Natural killer cell (primary cell): ENCODE measurements at regions of chrX and their contacts with region 1.

Region 1: DNA sequence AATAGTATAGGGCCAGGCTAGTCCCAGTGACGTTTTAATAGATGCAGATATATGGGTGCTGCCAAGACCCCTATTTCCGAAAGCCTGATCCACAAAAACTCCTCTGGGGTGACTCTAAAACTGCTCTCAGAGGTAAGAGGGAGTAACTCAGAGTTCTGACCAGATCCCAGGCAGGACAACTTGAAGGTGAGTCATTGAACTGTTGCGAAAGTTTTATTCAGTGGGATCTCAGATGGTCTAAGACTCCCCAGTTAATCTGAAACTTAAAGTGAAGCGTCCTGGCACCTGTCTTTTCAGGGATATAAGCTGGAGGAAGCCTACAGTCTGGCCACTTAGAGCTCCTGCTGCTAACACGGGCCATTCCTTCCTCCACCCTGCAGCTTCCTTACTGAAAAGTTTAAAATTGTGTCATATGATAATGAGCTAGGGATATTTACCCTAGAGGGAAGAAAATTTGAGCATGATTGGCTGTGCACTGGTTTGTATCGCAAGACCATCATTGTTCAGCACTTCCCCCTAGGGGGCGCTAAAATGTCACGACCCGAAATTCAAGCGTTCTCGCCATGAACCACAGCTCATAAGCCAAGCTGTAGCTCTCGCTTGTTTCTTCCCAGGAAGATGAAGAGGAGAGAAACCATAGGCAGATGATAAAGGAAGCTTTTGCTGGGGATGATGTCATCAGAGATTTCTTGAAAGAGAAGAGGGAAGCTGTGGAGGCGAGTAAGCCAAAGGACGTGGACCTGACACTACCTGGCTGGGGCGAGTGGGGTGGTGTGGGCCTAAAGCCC is 19.5 kb downstream of the UTP14A start:
- DNase-seq: peak; percentile 47 to 85
- ATAC-seq: peak; percentile 71 to 80 (median 77)
- H3K4me3 ChIP-seq: no peak overlapping the region
- H3K4me3 Mint-ChIP-seq: no peak overlapping the region
- H3K27ac ChIP-seq: no peak overlapping the region
- H3K27ac Mint-ChIP-seq: no peak overlapping the region
- H3K4me1 ChIP-seq: no peaks in the 10 kb centered on the region
- H3K4me1 Mint-ChIP-seq: peaks cover 0 to 5% of the 10 kb centered on the region in 2 donors
- H3K27me3 ChIP-seq: no peaks in the 10 kb centered on the region
- H3K27me3 Mint-ChIP-seq: no peaks in the 10 kb centered on the region
- CTCF ChIP-seq: peak; percentile 64

Region 2: DNA sequence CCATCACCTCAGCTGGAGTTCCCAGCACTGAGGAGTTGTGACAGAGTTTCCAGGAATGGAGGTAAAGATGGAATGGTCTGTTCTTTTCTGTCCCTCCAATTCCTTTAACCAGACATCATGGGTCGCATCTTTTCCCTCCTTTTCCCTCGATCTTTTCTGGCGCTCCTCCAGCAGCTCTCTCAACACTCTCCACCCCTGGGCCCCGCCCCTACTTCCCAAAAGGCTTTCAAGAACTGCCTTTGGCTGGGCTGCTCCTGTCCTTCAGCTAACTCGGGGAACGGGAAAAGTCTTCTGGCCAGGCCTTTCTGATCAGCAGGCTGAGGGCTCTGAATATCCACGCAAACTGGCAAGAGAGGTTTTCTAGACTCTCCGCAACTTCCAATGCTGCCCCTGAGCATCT is 14.5 kb after region 1 on chrX:
- intact Hi-C with region 1: no loop called
- DNase-seq: no peak
- ATAC-seq: no peak
- H3K4me3 ChIP-seq: no peak overlapping the region
- H3K4me3 Mint-ChIP-seq: no peak overlapping the region
- H3K27ac ChIP-seq: no peak overlapping the region
- H3K27ac Mint-ChIP-seq: no peak overlapping the region
- H3K4me1 ChIP-seq: no peaks in the 10 kb centered on the region
- H3K4me1 Mint-ChIP-seq: no peaks in the 10 kb centered on the region
- H3K27me3 ChIP-seq: no peaks in the 10 kb centered on the region
- H3K27me3 Mint-ChIP-seq: peaks cover 9 to 15% of the 10 kb centered on the region in 2 donors
- CTCF ChIP-seq: no peak

Region 3: DNA sequence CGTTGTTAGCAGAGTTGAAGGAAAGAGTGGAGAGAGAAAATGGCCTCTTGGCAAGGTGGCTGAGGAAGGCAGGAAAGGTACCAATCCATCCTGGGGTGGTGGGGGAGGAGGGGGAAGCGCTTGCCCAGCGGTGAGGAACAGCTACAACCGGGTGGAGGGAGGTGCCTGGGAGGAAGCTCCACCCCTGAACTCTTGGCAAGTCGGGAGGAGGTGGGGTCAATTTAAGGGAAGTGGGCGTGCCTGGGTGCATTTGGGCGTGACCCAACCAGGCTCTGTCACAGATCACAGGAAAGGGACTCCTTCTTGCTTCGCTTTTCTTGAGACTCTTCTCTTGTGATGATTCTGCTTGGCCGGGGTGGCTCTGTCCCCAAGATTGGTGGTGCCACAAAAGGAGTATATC is 98.6 kb after region 1 on chrX:
- intact Hi-C with region 1: loop called (anchors 1 kb)
- DNase-seq: peak; percentile 68 to 91
- ATAC-seq: peak; percentile 99 to 100 (median 100)
- H3K4me3 ChIP-seq: no peak overlapping the region
- H3K4me3 Mint-ChIP-seq: peak overlapping the region; percentile 71
- H3K27ac ChIP-seq: peak overlapping the region; percentile 45
- H3K27ac Mint-ChIP-seq: peak overlapping the region; percentile 49 to 83
- H3K4me1 ChIP-seq: peaks cover 12% of the 10 kb centered on the region
- H3K4me1 Mint-ChIP-seq: peaks cover 13% of the 10 kb centered on the region in 2 donors
- H3K27me3 ChIP-seq: no peaks in the 10 kb centered on the region
- H3K27me3 Mint-ChIP-seq: no peaks in the 10 kb centered on the region
- CTCF ChIP-seq: no peak

Region 4: DNA sequence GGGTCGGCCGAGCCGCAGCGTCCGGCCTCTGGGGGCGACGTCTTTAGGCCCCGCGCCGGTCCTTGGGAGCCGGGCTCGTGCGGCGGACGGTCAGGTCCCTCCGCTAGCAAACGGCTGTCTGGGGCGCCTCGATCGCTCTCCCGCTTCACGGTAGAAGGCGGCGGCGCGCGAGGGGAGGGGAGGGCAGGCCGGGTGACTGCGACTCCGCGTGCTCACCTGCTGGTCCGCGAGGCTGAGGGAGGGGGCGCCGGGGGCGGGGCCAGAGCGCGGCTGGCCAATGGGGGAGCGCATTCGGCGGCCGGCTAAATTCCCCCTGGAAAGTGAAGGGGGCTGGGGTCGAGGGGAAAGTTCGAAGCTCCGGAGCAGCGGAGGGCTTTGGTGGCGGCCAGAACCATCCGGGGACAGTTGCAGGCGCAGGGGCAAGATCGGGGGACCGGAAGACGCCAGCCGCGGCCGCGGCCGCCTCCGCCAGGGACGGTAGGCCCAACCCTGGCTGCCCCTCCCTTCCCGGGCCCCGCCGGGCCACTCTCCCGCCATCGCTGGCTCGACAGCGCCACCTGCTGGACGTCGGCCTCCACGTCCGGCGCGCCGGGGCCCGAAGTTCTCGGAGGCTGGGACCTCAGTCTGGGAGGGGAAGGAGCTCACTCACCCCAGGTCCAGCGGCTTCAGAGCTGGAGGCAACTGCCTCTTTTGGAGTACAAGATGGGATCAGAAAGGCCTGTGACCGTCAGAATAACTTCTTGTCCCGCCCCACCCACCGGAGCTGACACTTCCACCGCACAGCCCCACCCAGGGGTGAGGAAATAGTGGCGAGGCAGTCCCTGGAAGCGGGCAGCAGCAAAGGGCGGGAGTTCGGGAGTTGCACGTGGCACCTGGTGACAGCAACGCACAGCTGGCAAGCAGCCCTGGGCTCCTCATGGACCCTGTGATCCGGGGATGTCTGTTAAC is 134.9 kb after region 1 on chrX:
- intact Hi-C with region 1: loop called (anchors 1 kb)
- DNase-seq: peak; percentile 83 to 86
- ATAC-seq: peak; percentile 91 to 97 (median 92)
- H3K4me3 ChIP-seq: peak overlapping the region; percentile 46
- H3K4me3 Mint-ChIP-seq: peak overlapping the region; percentile 83
- H3K27ac ChIP-seq: no peak overlapping the region
- H3K27ac Mint-ChIP-seq: peak overlapping the region in 1 of 2 donors; percentile 70
- H3K4me1 ChIP-seq: peaks cover 15% of the 10 kb centered on the region
- H3K4me1 Mint-ChIP-seq: peaks cover 4 to 7% of the 10 kb centered on the region in 2 donors
- H3K27me3 ChIP-seq: no peaks in the 10 kb centered on the region
- H3K27me3 Mint-ChIP-seq: no peaks in the 10 kb centered on the region
- CTCF ChIP-seq: peak; percentile 70

Region 5: GRCh38 chrX:130190801-130191200 is 265.3 kb after region 1 on chrX:
- intact Hi-C with region 1: loop called (anchors 5 kb)
- DNase-seq: no peak
- ATAC-seq: no peak
- H3K4me3 ChIP-seq: no peak overlapping the region
- H3K4me3 Mint-ChIP-seq: no peak overlapping the region
- H3K27ac ChIP-seq: no peak overlapping the region
- H3K27ac Mint-ChIP-seq: no peak overlapping the region
- H3K4me1 ChIP-seq: no peaks in the 10 kb centered on the region
- H3K4me1 Mint-ChIP-seq: no peaks in the 10 kb centered on the region
- H3K27me3 ChIP-seq: no peaks in the 10 kb centered on the region
- H3K27me3 Mint-ChIP-seq: peaks cover 0 to 5% of the 10 kb centered on the region in 2 donors
- CTCF ChIP-seq: no peak